HEK293T (cell line): ENCODE measurements at regions of chr15 and their contacts with region 1.

Region 1: DNA sequence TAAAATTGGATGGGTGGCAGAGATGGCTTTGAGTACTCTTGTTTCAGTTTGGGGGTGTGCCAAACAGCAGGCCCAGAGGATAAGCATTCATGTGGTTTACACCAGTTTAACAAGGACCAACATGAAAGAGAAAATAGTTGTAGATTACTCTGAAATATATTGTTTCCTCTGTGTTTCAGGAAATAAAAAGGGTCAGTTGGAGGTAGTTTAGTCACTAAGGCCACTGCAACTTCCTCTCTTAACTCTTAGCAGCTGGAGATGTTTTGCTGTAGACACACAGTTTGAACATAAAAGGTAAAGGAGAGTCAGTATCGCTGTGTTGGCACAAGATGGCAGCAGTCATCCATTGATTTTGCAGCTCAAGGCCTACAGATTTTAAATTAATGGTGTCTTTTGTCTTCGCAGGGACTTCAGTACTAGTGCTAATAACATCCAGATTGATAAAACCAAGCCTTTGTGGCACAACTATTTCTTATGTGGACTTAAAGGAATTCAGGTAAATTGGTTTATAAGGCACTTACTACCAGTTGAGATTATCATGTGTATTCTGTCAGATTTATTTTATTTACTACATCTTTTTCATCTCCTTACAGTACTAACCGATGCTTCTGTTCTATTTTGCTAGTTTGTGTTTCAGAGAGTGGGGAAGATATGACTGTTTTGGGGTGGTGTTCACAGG is 65.5 kb downstream of the GALK2 start:
- DNase-seq: peak; percentile 28

Region 2: DNA sequence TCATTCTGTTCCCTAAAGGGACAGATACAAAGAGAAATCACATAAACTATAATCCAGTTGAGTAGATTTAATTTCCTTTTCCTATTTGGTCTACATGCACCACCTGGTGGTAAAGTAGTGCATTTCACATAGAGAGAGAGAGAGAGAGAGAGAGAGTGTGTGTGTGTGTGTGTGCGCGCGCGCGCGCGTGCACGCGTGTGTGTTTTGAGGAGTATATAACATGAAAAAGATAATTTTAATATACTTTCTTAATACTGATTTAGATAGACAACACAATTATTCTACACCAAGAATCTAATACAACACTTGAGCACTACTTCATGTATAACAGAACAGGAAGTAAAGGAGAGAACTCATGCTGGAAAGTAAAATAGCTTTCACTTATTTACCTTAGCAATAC is 186.4 kb after region 1 on chr15:
- CTCF ChIA-PET with region 1: interaction called, 13 read pairs
- POLR2A ChIA-PET with region 1: no interaction called
- DNase-seq: peak; percentile 6